ENCODE measurements at regions of chr2 and their contacts with region 1.

Region 1: DNA sequence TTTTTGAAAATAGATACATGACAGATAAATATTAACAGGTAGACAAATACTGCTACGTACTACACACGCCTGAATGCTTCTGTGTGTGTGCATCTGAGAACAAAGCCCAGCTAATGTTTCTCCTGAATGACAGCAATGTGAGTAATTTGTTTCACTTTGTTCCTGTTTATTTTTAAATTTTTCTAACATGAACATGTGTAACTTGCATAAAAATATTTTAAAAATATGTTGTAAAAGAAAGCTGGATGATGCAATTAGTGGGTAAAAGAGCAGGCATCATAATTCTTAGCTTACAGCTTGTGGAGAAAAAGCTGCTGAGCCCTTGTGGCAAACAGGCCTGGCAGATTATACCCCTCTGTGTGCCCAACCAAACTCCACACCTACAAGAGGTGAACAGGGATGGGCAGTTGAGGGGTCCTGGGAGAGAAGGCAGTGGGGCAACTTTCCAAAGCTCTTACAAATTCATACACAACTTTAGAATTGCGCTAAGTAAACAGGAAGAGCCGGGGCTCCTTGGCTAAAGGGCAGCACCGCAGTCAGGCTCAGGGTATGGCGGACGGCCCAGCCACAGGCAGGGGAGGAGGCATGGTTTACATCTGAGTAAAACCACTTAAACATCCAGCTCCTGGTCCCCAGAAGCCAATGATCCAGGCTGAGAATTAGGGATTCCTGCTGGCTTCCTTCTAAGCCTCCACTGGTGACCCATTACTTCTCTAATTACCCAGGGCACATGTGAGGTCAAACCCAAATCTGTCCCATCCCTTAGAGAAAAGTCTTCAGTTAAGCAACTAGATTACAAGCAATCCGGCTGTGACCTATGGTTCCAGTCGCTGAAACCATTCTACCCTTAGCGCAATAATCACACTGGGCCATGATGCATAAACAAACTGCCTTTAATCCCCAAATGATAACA is 14.0 kb downstream of the PXDN start:
- DNase-seq: peak; percentile 84
- H3K4me3 ChIP-seq: peak overlapping the region; percentile 49
- H3K27ac ChIP-seq: peak overlapping the region; percentile 99
- H3K27me3 ChIP-seq: no peaks in the 10 kb centered on the region
- CTCF ChIP-seq: no peak

Region 2: DNA sequence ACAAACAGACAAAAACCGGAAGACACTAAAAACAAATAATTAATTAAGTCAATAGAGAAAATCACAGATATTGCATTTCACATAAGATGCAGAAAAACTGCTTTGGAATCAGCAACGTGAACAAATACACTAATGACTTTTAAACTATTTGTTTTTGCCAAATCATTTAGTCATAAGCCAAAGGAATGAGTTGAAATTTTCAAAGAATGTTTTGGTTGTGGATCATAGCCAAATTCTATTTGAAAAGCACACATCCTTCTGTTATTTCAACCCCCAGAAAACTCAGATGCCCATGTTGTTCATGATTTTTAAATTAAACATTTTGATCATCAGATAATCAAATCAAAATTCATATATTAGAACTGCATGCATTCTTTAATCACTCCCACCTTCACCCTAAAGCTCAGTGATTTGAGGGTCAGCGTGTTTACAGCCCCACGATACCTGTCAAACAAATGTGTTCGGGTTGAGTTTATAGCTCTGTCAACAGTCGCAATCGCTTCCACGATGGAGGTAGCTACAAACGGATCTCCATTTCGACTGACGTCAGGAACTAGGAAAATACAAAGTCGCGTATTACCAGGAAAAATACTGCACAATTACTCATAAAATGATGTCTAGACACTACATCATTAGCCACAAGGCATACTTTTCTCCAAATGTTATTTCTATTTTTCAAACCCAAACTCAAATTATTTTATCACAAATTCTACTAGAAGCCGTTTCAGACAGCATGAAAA is 76.1 kb before region 1 on chr2:
- CTCF ChIA-PET with region 1: no interaction called
- POLR2A ChIA-PET with region 1: interaction called, 19 read pairs
- DNase-seq: peak; percentile 54
- H3K4me3 ChIP-seq: no peak overlapping the region
- H3K27ac ChIP-seq: peak overlapping the region; percentile 86
- H3K27me3 ChIP-seq: no peaks in the 10 kb centered on the region
- CTCF ChIP-seq: no peak

Region 3: GRCh38 chr2:1675633-1676032 is 54.6 kb before region 1 on chr2:
- CTCF ChIA-PET with region 1: interaction called, 4 read pairs
- POLR2A ChIA-PET with region 1: interaction called, 14 read pairs
- DNase-seq: peak; percentile 90
- H3K4me3 ChIP-seq: no peak overlapping the region
- H3K27ac ChIP-seq: peak overlapping the region; percentile 83
- H3K27me3 ChIP-seq: no peaks in the 10 kb centered on the region
- CTCF ChIP-seq: peak; percentile 85

Region 4: GRCh38 chr2:1685957-1686784 is 44.1 kb before region 1 on chr2:
- CTCF ChIA-PET with region 1: no interaction called
- POLR2A ChIA-PET with region 1: interaction called, 12 read pairs
- DNase-seq: no peak
- H3K4me3 ChIP-seq: no peak overlapping the region
- H3K27ac ChIP-seq: peak overlapping the region; percentile 52
- H3K27me3 ChIP-seq: no peaks in the 10 kb centered on the region
- CTCF ChIP-seq: no peak

Region 5: GRCh38 chr2:1698188-1698945 is 31.9 kb before region 1 on chr2:
- CTCF ChIA-PET with region 1: no interaction called
- POLR2A ChIA-PET with region 1: interaction called, 10 read pairs
- DNase-seq: no peak
- H3K4me3 ChIP-seq: no peak overlapping the region
- H3K27ac ChIP-seq: no peak overlapping the region
- H3K27me3 ChIP-seq: no peaks in the 10 kb centered on the region
- CTCF ChIP-seq: no peak

Region 6: GRCh38 chr2:1707771-1708418 is 22.4 kb before region 1 on chr2:
- CTCF ChIA-PET with region 1: no interaction called
- POLR2A ChIA-PET with region 1: interaction called, 14 read pairs
- DNase-seq: peak; percentile 60
- H3K4me3 ChIP-seq: peak overlapping the region; percentile 25; the same call in 1 of the 2 replicates
- H3K27ac ChIP-seq: peak overlapping the region; percentile 68
- H3K27me3 ChIP-seq: no peaks in the 10 kb centered on the region
- CTCF ChIP-seq: no peak

Region 7: GRCh38 chr2:1742681-1743395 is 12.6 kb after region 1 on chr2:
- CTCF ChIA-PET with region 1: interaction called, 8 read pairs
- POLR2A ChIA-PET with region 1: interaction called, 20 read pairs
- DNase-seq: no peak
- H3K4me3 ChIP-seq: peak overlapping the region; percentile 77
- H3K27ac ChIP-seq: peak overlapping the region; percentile 91
- H3K27me3 ChIP-seq: no peaks in the 10 kb centered on the region
- CTCF ChIP-seq: peak; percentile 53

Measured in AG04450 (cell line).